ENCODE measurements at regions of chr22 and their contacts with region 1.

Region 1: DNA sequence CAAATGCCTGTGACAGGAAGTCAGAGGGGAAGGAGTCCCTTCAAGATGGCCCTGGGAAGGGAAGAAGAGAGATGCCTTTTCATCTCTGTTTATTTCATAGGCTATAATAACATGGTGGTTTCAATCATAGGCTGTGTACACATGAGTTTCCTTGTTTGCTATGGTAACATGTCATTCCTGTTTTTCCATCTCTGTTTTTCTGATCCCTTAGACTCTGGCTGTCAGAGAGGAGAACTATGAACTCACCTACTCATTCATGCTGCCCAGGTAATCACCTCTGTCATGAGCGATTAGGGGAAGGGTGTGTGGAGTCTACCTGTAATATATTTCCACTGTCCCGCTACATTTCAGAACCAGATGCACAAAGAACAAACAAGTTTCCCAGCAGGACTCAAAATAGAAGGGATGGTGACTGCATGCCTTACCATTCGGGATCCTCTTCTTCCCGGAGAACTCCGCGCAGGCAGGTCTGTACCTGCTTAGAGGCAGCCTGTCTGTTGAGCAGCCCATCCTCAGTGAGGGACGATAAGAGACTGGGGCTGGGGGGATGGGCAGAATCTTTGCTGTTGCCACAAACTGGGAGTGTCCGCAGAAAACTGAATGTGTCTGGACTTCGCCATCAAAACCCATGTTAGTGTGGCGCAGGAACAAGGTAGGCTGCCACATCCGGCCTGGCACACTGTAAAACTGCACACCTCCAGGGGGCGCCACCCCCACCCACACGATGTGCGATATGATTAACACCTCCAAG is 7.1 kb upstream of the PEX26 start:
- DNase-seq: no peak

Region 2: DNA sequence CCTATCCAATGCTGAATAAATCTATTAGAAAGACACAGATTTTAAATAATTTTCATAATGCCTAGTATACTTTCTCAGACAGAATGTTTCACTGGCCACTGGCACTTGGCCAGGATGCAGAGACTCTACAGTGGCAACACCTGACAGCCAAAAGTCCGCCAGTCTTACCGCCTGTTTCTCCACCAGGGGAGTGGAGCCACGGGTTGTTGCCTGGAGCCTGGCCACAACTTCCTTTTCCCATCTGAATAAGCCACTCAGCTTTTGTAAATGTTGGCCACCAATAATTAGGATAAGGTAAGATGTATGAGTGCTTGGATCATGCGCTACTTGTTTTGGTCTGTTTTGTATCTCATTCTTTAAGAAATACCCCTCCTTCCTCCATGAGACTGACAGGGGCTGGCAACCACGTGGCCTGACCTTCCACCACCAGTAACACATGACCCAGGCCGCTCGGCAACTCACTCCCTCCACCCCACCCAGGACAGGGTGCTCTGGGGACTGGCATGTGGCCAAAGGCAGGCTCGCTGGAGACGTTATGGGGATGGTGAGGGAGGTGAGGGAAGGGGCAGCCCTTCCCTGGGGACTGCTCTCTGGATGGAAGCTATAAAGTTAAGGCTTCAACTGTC is 203.5 kb before region 1 on chr22:
- intact Hi-C with region 1: no loop called
- DNase-seq: no peak

Region 3: GRCh38 chr22:18031695-18032454 is 38.9 kb before region 1 on chr22:
- intact Hi-C with region 1: loop called (anchors 5 kb)
- DNase-seq: no peak

Region 4: GRCh38 chr22:18110194-18110953 is 39.6 kb after region 1 on chr22 and contains the start of gene TUBA8:
- intact Hi-C with region 1: no loop called
- DNase-seq: peak; percentile 85
- total RNA-seq, gene TUBA8: 84.0 TPM

Region 5: GRCh38 chr22:18121950-18122544 is 51.3 kb after region 1 on chr22:
- intact Hi-C with region 1: no loop called
- DNase-seq: no peak

Measured in cardiac septum (tissue), 1 donor.